ENCODE measurements at regions of chr2 and their contacts with region 1.

Region 1: GRCh38 chr2:85813982-85814801 is 60.4 kb downstream of the ATOH8 start:
- DNase-seq: peak; percentile 81 to 82 (median 81)
- H3K4me3 ChIP-seq: no peak overlapping the region
- H3K4me3 Mint-ChIP-seq: no peak overlapping the region
- H3K27ac ChIP-seq: no peak overlapping the region
- H3K27ac Mint-ChIP-seq: peak overlapping the region in 1 of 7 donors; percentile 83
- H3K4me1 ChIP-seq: no peaks in the 10 kb centered on the region
- H3K4me1 Mint-ChIP-seq: peaks cover 5% of the 10 kb centered on the region
- H3K27me3 ChIP-seq: peaks cover 0 to 5% of the 10 kb centered on the region in 2 donors
- H3K27me3 Mint-ChIP-seq: peaks cover 13 to 26% (median 19%) of the 10 kb centered on the region in 3 donors
- CTCF ChIP-seq: peak; percentile 94

Region 2: GRCh38 chr2:85635636-85636035 is 178.6 kb before region 1 on chr2:
- intact Hi-C with region 1: loop called (anchors 1 to 5 kb)
- DNase-seq: no peak
- H3K4me3 ChIP-seq: no peak overlapping the region
- H3K4me3 Mint-ChIP-seq: no peak overlapping the region
- H3K27ac ChIP-seq: peak overlapping the region in 1 of 2 donors; percentile 65
- H3K27ac Mint-ChIP-seq: peak overlapping the region in 3 of 7 donors; percentile 1 to 38 (median 20)
- H3K4me1 ChIP-seq: no peaks in the 10 kb centered on the region
- H3K4me1 Mint-ChIP-seq: peaks cover 7% of the 10 kb centered on the region
- H3K27me3 ChIP-seq: no peaks in the 10 kb centered on the region
- H3K27me3 Mint-ChIP-seq: no peaks in the 10 kb centered on the region
- CTCF ChIP-seq: no peak

Region 3: GRCh38 chr2:85642725-85643124 is 171.5 kb before region 1 on chr2:
- intact Hi-C with region 1: loop called (anchors 1 to 5 kb)
- DNase-seq: no peak
- H3K4me3 ChIP-seq: no peak overlapping the region
- H3K4me3 Mint-ChIP-seq: no peak overlapping the region
- H3K27ac ChIP-seq: no peak overlapping the region
- H3K27ac Mint-ChIP-seq: peak overlapping the region in 2 of 7 donors; percentile 48 to 68
- H3K4me1 ChIP-seq: peaks cover 5% of the 10 kb centered on the region in 2 donors
- H3K4me1 Mint-ChIP-seq: peaks cover 6% of the 10 kb centered on the region
- H3K27me3 ChIP-seq: no peaks in the 10 kb centered on the region
- H3K27me3 Mint-ChIP-seq: no peaks in the 10 kb centered on the region
- CTCF ChIP-seq: no peak

Region 4: GRCh38 chr2:85728883-85729824 is 85.0 kb before region 1 on chr2:
- intact Hi-C with region 1: loop called (anchors 2 to 5 kb)
- DNase-seq: peak; percentile 68 to 80 (median 76)
- H3K4me3 ChIP-seq: peak overlapping the region in 2 of 3 experiments; percentile 1 to 60
- H3K4me3 Mint-ChIP-seq: peak overlapping the region; percentile 48 to 73
- H3K27ac ChIP-seq: peak overlapping the region; percentile 6 to 54
- H3K27ac Mint-ChIP-seq: peak overlapping the region; percentile 11 to 82 (median 45)
- H3K4me1 ChIP-seq: peaks cover 32 to 39% of the 10 kb centered on the region in 2 donors
- H3K4me1 Mint-ChIP-seq: peaks cover 36% of the 10 kb centered on the region
- H3K27me3 ChIP-seq: no peaks in the 10 kb centered on the region
- H3K27me3 Mint-ChIP-seq: peaks cover 0 to 2% (median 0%) of the 10 kb centered on the region in 3 donors
- CTCF ChIP-seq: peak; percentile 89

Region 5: DNA sequence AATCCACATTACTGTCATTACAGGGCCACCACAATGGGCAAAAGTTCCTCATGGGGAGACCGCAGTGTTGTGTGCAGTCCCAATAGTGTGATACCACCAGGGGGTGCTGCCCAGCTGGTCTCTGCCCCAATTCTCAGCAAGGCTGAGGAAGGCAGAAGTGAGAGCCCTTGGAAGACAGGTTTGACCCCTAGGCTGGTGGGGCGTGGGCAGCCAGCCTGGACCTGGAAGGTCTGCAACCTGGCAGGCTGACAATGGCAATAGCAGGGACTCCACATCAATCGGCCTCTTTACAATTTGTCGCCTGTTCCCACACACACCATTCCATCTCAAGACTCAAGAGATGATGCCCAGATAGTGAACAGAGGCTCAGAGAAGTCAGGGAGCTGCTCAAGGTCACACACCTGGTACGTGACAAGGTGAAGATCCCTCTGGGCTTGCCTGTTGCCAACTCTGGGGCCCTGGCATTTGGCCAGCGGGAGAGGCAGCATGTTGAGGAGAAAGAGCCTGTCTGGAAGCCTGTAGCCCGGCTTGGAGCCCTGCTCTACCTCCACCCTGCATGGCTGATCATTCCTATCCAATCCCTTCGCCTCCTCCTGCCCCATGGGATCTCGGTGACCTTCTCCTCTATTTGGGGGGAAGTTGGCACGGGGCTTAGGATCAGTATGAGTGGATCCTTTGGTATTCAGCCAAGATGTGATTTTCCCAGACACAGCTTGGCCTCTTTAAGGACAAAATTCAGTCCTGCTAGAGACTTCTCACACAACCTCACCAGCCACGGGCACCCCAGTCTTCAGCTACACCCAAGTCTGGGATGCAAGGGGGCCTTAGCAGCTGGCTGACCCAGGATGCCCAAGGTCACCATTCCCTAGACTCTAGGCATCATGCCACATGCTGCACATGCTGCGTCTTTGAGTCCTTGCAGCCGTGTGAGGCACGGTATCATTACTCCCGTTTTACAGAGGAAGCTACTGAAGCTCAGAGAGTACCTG is 63.3 kb before region 1 on chr2:
- intact Hi-C with region 1: loop called (anchors 2 kb)
- DNase-seq: peak; percentile 76 to 79 (median 79)
- H3K4me3 ChIP-seq: no peak overlapping the region
- H3K4me3 Mint-ChIP-seq: peak overlapping the region; percentile 22 to 80
- H3K27ac ChIP-seq: no peak overlapping the region
- H3K27ac Mint-ChIP-seq: peak overlapping the region in 2 of 7 donors; percentile 22 to 69
- H3K4me1 ChIP-seq: peaks cover 42 to 61% of the 10 kb centered on the region in 2 donors
- H3K4me1 Mint-ChIP-seq: peaks cover 53% of the 10 kb centered on the region
- H3K27me3 ChIP-seq: peaks cover 33 to 47% of the 10 kb centered on the region in 2 donors
- H3K27me3 Mint-ChIP-seq: peaks cover 45 to 62% (median 59%) of the 10 kb centered on the region in 3 donors
- CTCF ChIP-seq: peak; percentile 88

Measured in CD14-positive monocyte (primary cell).